ENCODE measurements at regions of chr9 and their contacts with region 1.

Region 1: GRCh38 chr9:38689678-38690077 is 30.3 kb downstream of the FAM240B start:
- DNase-seq: peak; percentile 42
- ATAC-seq: peak; percentile 80
- H3K4me3 Mint-ChIP-seq: peak overlapping the region; percentile 2; the same call in 1 of the 2 replicates
- H3K27ac Mint-ChIP-seq: peak overlapping the region; percentile 86
- H3K4me1 Mint-ChIP-seq: peaks cover 89% of the 10 kb centered on the region
- H3K27me3 Mint-ChIP-seq: no peaks in the 10 kb centered on the region; the same call in 1 of the 2 replicates
- CTCF ChIP-seq: no peak

Region 2: GRCh38 chr9:38671748-38672147 is 17.9 kb before region 1 on chr9:
- CTCF ChIA-PET with region 1: interaction called, 10 read pairs
- POLR2A ChIA-PET with region 1: interaction called, 6 read pairs
- DNase-seq: no peak
- ATAC-seq: no peak
- H3K4me3 Mint-ChIP-seq: peak overlapping the region; percentile 50; the same call in 1 of the 2 replicates
- H3K27ac Mint-ChIP-seq: peak overlapping the region; percentile 70
- H3K4me1 Mint-ChIP-seq: peaks cover 43% of the 10 kb centered on the region
- H3K27me3 Mint-ChIP-seq: peaks cover 4% of the 10 kb centered on the region; the same call in 1 of the 2 replicates
- CTCF ChIP-seq: no peak

Region 3: GRCh38 chr9:38768351-38768761 is 78.7 kb after region 1 on chr9:
- CTCF ChIA-PET with region 1: no interaction called
- POLR2A ChIA-PET with region 1: no interaction called
- DNase-seq: no peak
- ATAC-seq: no peak
- H3K4me3 Mint-ChIP-seq: no peak overlapping the region
- H3K27ac Mint-ChIP-seq: no peak overlapping the region
- H3K4me1 Mint-ChIP-seq: no peaks in the 10 kb centered on the region
- H3K27me3 Mint-ChIP-seq: no peaks in the 10 kb centered on the region
- CTCF ChIP-seq: no peak

Measured in WTC11 (cell line).